Activated T-helper 2 cell treated with anti-CD3 and anti-CD28 coated beads, Interferon-gamma antibody, Interleukin-2, Interleukin-4, amounts not matched to agents 10 μg/mL and 5 μg/mL and 100 μg/mL, durations not matched to agents 14 hours and 24 hours and 36 hours (primary cell): ENCODE measurements at regions of chr12 and their contacts with region 1.

Region 1: DNA sequence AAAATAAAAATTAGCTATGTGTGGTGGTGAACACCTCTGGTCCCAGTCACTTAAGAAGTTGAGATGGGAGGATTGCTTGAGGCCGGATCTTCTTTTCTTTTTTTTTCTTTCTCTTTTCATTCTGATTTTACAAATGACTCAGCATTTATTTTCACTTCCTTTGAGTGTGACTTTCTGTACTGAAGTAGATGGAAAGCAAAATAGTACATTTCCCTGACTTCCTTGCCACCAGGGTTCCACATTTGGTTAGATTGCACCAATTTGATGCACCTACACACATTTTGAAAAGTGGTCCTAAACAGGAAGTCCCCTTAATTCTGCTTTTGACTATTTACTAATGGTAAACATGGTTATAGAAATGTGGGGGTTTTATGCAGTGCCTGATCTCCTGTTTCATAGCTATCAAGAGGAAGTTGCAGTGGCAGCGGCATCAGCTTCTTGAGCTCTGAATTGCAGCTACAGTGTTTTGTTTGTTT is 13.0 kb upstream of the LEMD3 start:
- DNase-seq: no peak
- H3K4me3 Mint-ChIP-seq: peak overlapping the region; percentile 50
- H3K27ac Mint-ChIP-seq: peak overlapping the region; percentile 73
- H3K4me1 Mint-ChIP-seq: peaks cover 17% of the 10 kb centered on the region
- H3K27me3 Mint-ChIP-seq: peaks cover 21% of the 10 kb centered on the region

Region 2: GRCh38 chr12:64943686-64944085 is 212.7 kb before region 1 on chr12:
- intact Hi-C with region 1: no loop called
- DNase-seq: no peak
- H3K4me3 Mint-ChIP-seq: no peak overlapping the region
- H3K27ac Mint-ChIP-seq: no peak overlapping the region
- H3K4me1 Mint-ChIP-seq: no peaks in the 10 kb centered on the region
- H3K27me3 Mint-ChIP-seq: peaks cover 7% of the 10 kb centered on the region

Region 3: DNA sequence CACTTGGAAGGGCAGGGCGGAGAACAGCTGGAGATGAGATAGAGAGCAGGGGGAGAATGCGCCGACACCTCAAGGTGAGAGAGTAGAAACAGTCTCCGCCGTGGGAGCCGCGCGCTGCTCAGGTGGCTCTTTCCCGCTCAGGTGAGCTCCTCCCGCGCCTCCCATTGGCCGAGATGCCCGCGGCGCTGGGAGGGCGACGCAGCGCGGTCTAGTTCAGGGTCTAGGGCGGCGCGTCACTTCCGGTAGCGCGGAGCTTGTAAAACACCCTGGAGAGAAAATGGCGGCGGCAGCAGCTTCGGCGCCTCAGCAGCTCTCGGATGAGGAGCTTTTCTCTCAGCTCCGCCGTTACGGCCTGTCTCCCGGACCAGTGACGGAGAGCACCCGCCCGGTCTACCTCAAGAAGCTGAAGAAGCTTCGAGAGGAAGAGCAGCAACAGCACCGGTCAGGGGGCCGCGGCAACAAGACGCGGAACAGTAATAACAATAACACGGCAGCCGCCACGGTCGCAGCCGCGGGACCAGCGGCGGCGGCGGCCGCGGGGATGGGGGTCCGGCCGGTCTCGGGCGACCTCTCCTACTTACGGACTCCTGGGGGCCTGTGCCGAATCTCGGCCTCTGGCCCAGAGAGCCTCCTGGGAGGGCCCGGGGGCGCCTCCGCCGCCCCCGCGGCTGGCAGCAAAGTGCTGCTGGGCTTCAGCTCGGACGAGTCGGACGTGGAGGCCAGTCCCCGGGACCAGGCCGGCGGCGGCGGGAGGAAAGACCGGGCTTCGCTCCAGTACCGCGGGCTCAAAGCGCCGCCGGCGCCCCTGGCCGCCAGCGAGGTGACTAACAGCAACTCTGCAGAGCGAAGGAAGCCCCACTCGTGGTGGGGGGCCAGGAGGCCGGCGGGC is 13.2 kb after region 1 on chr12 and contains the start of gene LEMD3:
- intact Hi-C with region 1: loop called (anchors 1 kb)
- DNase-seq: peak; percentile 88
- H3K4me3 Mint-ChIP-seq: peak within 1 kb of the TSS; percentile 99
- H3K27ac Mint-ChIP-seq: peak within 1 kb of the TSS; percentile 99
- H3K4me1 Mint-ChIP-seq: peaks cover 24% of the 10 kb centered on the region
- H3K27me3 Mint-ChIP-seq: peaks cover 2% of the 10 kb centered on the region
- total RNA-seq, gene LEMD3: 26.7 and 29.2 TPM in 2 replicates